Posterior vena cava (tissue), 2 donors: ENCODE measurements at regions of chr17 and their contacts with region 1.

Region 1: DNA sequence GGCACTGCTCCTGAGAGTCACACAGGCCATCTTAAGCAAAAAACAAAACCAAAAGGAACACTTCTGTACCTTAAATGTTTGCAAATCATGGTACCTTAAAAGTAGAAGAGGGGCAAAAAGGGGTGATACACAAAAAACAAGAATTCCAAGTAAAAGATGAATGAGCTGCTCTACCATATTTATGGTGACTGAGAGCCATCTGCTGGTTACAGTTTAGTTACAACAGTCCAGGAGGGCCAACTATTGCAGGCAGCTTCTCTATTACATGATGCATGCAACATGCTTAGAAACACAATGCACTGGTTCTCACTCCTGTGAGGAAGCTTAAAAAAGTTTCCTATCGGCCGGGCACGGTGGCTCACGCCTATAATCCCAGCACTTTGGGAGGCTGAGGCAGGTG is 53.5 kb downstream of the STX8 start:
- DNase-seq: no peak

Region 2: GRCh38 chr17:8991514-8992285 is 530.4 kb before region 1 on chr17:
- intact Hi-C with region 1: loop called (anchors 5 kb)
- DNase-seq: no peak

Region 3: GRCh38 chr17:8997994-8998628 is 524.0 kb before region 1 on chr17:
- intact Hi-C with region 1: loop called (anchors 5 kb)
- DNase-seq: peak; percentile 88